A673 (cell line): ENCODE measurements at regions of chr13 and their contacts with region 1.

Region 1: DNA sequence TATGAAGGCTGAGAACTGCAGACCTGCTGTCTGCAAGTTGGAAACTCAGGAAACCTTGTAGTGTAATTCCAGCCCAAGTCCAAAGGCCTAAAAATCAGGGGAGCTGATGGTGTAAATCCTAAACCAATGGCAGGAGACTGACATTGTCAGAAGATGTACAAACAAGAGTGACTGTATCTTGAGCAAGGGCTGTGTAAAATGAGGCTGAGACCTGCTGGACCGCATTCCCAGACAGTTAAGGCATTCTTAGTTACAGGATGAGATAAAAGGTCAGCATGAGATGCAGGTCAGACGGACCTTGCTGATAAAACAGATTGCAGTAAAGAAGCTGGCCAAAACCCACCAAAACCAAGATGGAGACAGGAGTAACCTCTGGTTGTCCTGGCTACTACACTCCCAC is 147.7 kb downstream of the COG6 start:
- DNase-seq: no peak
- H3K4me3 ChIP-seq: no peak overlapping the region
- H3K27ac ChIP-seq: no peak overlapping the region
- H3K4me1 ChIP-seq: peaks cover 11% of the 10 kb centered on the region
- H3K27me3 ChIP-seq: no peaks in the 10 kb centered on the region
- CTCF ChIP-seq: no peak

Region 2: DNA sequence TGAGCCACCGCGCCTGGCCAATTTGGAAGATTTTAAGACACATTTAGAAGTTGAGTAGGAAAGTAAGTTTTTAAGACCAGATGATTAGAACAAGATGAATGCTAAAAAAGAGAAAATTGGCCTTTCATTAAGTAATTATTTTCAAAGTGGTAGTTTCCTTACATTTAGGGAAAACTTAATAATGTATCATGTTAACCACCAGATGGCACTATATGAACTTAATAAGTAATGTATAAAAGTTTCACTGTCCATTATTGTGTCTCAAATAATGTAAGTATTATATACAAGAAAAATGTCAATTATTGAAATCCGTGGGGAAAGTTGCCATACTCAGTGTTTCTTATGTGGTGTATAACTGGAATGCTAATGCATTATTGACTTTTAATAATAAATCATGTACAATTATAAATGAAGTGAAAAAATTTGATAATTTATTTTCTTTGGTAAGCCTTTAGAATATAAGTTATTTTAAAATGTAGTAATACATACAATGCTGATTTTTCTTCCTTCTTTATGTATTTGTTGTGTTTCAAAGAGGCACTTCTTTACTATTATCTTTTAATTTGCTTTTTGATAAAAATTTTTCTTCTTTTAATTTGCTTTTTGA is 118.5 kb before region 1 on chr13:
- CTCF ChIA-PET with region 1: no interaction called
- POLR2A ChIA-PET with region 1: no interaction called
- intact Hi-C with region 1: no loop called
- DNase-seq: peak; percentile 73
- H3K4me3 ChIP-seq: no peak overlapping the region
- H3K27ac ChIP-seq: no peak overlapping the region
- H3K4me1 ChIP-seq: no peaks in the 10 kb centered on the region
- H3K27me3 ChIP-seq: no peaks in the 10 kb centered on the region
- CTCF ChIP-seq: peak; percentile 56

Region 3: GRCh38 chr13:39976481-39976880 is 173.3 kb after region 1 on chr13:
- CTCF ChIA-PET with region 1: no interaction called
- POLR2A ChIA-PET with region 1: no interaction called
- intact Hi-C with region 1: no loop called
- DNase-seq: peak; percentile 18
- H3K4me3 ChIP-seq: no peak overlapping the region
- H3K27ac ChIP-seq: no peak overlapping the region
- H3K4me1 ChIP-seq: no peaks in the 10 kb centered on the region
- H3K27me3 ChIP-seq: no peaks in the 10 kb centered on the region
- CTCF ChIP-seq: no peak

Region 4: DNA sequence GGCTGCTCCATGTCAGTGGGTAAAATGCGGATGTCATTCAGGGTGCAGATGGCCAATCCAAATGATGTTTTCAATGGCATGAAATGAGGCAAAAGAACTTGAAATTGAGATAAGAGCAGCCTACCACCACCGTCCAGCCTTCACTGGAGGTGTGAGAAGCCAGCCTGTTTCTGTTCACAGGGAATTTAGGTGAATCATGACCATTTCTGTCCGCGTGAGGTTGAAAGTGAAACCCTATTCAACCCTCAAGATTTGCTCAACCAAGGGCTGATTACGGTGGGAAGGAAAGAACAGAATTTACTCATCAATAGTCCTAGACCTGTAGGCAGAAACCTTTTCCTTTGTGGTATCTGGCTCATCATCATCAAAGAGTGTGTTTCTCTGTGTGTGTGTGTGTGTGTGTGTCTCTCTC is 223.0 kb after region 1 on chr13:
- CTCF ChIA-PET with region 1: interaction called, 12 read pairs
- POLR2A ChIA-PET with region 1: no interaction called
- intact Hi-C with region 1: no loop called
- DNase-seq: no peak
- H3K4me3 ChIP-seq: no peak overlapping the region
- H3K27ac ChIP-seq: no peak overlapping the region
- H3K4me1 ChIP-seq: no peaks in the 10 kb centered on the region
- H3K27me3 ChIP-seq: no peaks in the 10 kb centered on the region
- CTCF ChIP-seq: no peak